MCF 10A (cell line): ENCODE measurements at regions of chr7 and their contacts with region 1.

Region 1: GRCh38 chr7:101058355-101058754 is 26.9 kb upstream of the TRIM56 start:
- DNase-seq: peak; percentile 55
- H3K4me3 Mint-ChIP-seq: no peak overlapping the region
- H3K27ac Mint-ChIP-seq: no peak overlapping the region
- H3K4me1 Mint-ChIP-seq: no peaks in the 10 kb centered on the region
- H3K27me3 Mint-ChIP-seq: peaks cover 77% of the 10 kb centered on the region
- CTCF ChIP-seq: no peak

Region 2: GRCh38 chr7:100719523-100720319 is 338.6 kb before region 1 on chr7:
- CTCF ChIA-PET with region 1: no interaction called
- POLR2A ChIA-PET with region 1: no interaction called
- intact Hi-C with region 1: loop called (anchors 10 kb)
- DNase-seq: peak; percentile 27
- H3K4me3 Mint-ChIP-seq: no peak overlapping the region
- H3K27ac Mint-ChIP-seq: no peak overlapping the region
- H3K4me1 Mint-ChIP-seq: no peaks in the 10 kb centered on the region
- H3K27me3 Mint-ChIP-seq: peaks cover 48% of the 10 kb centered on the region
- CTCF ChIP-seq: peak; percentile 61

Region 3: GRCh38 chr7:100896732-100897608 is 161.4 kb before region 1 on chr7:
- CTCF ChIA-PET with region 1: interaction called, 64 read pairs
- POLR2A ChIA-PET with region 1: interaction called, 4 read pairs
- intact Hi-C with region 1: loop called (anchors 1 kb)
- DNase-seq: no peak
- H3K4me3 Mint-ChIP-seq: no peak overlapping the region
- H3K27ac Mint-ChIP-seq: no peak overlapping the region
- H3K4me1 Mint-ChIP-seq: peaks cover 6% of the 10 kb centered on the region
- H3K27me3 Mint-ChIP-seq: peaks cover 36% of the 10 kb centered on the region
- CTCF ChIP-seq: peak; percentile 75

Region 4: DNA sequence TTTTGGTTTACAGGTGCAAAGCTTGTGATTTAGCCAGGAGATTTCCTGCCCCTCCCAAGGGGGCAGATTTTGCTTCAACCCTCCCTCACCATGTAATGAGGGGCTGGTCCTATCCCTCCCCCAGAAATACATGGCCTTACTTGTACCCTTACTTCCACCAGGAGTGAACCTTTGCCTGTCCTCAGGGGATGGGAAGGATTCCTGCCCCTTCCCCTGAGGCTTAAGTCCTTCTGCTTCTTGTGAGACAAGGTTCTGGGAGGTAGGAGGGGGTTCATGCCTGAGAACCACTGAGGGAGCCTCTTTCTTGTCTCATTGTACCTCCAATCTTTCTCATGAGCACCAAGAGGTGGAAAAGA is 128.6 kb before region 1 on chr7:
- CTCF ChIA-PET with region 1: no interaction called
- POLR2A ChIA-PET with region 1: no interaction called
- intact Hi-C with region 1: no loop called
- DNase-seq: no peak
- H3K4me3 Mint-ChIP-seq: no peak overlapping the region
- H3K27ac Mint-ChIP-seq: no peak overlapping the region
- H3K4me1 Mint-ChIP-seq: no peaks in the 10 kb centered on the region
- H3K27me3 Mint-ChIP-seq: no peaks in the 10 kb centered on the region
- CTCF ChIP-seq: no peak

Region 5: GRCh38 chr7:100965723-100966541 is 92.4 kb before region 1 on chr7:
- CTCF ChIA-PET with region 1: no interaction called
- POLR2A ChIA-PET with region 1: no interaction called
- intact Hi-C with region 1: loop called (anchors 2 kb)
- DNase-seq: peak; percentile 58
- H3K4me3 Mint-ChIP-seq: peak overlapping the region; percentile 60
- H3K27ac Mint-ChIP-seq: no peak overlapping the region
- H3K4me1 Mint-ChIP-seq: peaks cover 12% of the 10 kb centered on the region
- H3K27me3 Mint-ChIP-seq: peaks cover 69% of the 10 kb centered on the region
- CTCF ChIP-seq: peak; percentile 79

Region 6: DNA sequence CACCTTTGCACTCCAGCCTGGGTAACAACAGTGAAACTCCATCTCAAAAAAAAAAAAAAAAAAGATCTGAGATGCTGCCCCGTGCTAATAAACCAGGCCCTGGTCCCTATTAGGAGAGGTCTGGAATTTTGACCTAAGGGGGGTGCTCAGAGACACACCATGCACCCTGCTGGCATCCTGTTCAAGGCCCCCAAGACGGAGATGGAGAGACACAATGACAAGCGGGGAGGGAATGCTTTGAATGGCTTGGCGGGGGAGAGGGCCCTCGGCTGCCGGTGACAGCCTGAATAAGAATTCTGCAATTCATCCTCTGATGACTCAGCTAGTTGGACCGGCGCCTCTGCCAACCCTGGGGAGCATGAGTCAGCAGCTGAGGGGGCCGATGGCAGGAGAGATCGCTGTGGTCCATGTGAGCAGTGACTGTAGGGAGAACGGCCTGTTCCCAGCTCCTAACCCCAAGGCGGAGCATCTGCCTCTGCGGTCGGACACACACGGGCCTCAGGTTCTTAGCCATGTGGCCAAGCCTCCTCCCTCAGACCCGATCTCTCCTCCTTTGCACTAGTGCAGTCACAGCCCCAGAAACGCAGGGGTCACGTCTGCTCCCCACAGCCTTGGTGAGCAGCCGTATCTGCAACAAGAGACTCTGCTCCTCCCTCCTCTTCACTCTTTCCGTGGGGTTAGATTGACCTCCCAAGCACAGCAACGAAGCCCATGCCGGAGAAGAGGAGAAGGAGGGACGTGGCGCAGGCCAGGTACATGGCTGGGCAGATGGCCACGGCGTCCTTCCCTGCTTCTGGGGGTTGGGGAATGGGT is 41.8 kb after region 1 on chr7:
- CTCF ChIA-PET with region 1: no interaction called
- POLR2A ChIA-PET with region 1: no interaction called
- intact Hi-C with region 1: no loop called
- DNase-seq: peak; percentile 97
- H3K4me3 Mint-ChIP-seq: peak overlapping the region; percentile 54
- H3K27ac Mint-ChIP-seq: peak overlapping the region; percentile 73
- H3K4me1 Mint-ChIP-seq: peaks cover 29% of the 10 kb centered on the region
- H3K27me3 Mint-ChIP-seq: no peaks in the 10 kb centered on the region
- CTCF ChIP-seq: no peak

Region 7: DNA sequence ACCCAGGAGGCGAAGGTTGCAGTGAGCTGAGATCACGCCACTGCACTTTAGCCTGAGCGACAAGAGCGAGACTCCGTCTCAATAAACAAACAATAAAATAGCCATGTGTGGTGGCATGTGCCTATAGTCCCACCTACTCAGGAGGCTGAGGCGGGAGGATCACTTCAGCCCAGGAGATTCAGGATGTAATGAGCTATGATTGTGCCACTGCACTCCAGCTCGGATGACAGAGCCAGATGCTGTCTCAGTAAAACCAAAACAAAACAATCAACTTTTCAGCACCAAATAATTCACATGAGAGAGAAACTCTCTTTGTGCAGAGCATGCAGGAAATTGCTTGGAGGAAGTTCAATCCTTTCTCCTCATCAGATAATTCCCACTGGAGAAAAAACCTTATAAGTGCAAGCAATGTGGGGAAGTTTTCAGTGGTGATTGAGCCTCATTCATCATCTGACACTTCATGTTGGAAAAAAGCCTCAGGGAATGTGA is 199.9 kb after region 1 on chr7:
- CTCF ChIA-PET with region 1: no interaction called
- POLR2A ChIA-PET with region 1: no interaction called
- intact Hi-C with region 1: no loop called
- DNase-seq: no peak
- H3K4me3 Mint-ChIP-seq: no peak overlapping the region
- H3K27ac Mint-ChIP-seq: no peak overlapping the region
- H3K4me1 Mint-ChIP-seq: no peaks in the 10 kb centered on the region
- H3K27me3 Mint-ChIP-seq: no peaks in the 10 kb centered on the region
- CTCF ChIP-seq: no peak